ENCODE measurements at regions of chr3 and their contacts with region 1.

Region 1: GRCh38 chr3:19348929-19349564 is 200.7 kb downstream of the KCNH8 start:
- DNase-seq: peak; percentile 27
- CTCF ChIP-seq: peak; percentile 67

Region 2: GRCh38 chr3:19331931-19332330 is 17.1 kb before region 1 on chr3:
- CTCF ChIA-PET with region 1: interaction called, 12 read pairs
- POLR2A ChIA-PET with region 1: no interaction called
- DNase-seq: no peak
- CTCF ChIP-seq: no peak

Region 3: GRCh38 chr3:19364148-19364547 is 15.1 kb after region 1 on chr3:
- CTCF ChIA-PET with region 1: interaction called, 27 read pairs
- POLR2A ChIA-PET with region 1: no interaction called
- DNase-seq: no peak
- CTCF ChIP-seq: no peak

Region 4: DNA sequence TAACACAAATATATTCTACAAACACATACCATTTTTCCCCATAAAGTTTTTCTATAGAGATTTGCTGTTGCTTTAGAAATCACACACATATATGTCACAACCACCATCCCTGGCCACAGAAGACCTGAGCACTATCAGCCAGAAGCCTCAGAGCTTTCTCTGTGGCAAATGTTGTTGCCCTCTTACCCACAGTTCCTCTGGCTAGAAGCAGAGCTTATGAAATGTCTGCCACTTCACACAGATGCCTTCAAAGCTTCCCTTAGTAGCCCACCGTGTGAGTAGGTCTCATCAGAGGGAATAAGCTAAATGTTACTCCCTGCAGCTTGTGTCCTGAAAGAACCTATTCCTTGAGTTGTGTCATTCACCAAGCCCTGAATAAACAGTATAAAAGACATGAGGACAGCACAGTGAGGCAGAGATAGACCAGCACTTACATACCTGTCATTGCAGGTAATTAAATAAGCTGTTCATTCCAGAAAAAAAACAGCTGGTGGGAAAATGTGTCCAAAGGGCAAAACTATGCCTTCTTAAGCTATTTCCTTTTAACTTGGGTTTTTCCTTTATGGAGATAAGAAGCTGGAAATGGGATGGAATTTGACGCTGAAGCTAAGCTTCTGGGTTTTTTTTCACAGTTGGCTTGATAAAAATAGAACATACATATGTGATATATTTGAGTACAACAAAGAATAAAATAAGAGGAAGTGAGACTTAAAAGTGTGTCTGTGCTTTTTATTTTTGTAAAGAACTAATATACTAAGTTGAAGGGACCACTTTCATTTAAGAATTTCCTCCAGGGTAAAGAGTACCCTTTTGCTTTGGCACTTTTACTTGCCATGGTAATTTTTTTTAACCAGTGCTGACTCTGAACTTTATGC is 190.7 kb after region 1 on chr3:
- CTCF ChIA-PET with region 1: interaction called, 22 read pairs
- POLR2A ChIA-PET with region 1: no interaction called
- DNase-seq: peak; percentile 18
- CTCF ChIP-seq: no peak

Region 5: DNA sequence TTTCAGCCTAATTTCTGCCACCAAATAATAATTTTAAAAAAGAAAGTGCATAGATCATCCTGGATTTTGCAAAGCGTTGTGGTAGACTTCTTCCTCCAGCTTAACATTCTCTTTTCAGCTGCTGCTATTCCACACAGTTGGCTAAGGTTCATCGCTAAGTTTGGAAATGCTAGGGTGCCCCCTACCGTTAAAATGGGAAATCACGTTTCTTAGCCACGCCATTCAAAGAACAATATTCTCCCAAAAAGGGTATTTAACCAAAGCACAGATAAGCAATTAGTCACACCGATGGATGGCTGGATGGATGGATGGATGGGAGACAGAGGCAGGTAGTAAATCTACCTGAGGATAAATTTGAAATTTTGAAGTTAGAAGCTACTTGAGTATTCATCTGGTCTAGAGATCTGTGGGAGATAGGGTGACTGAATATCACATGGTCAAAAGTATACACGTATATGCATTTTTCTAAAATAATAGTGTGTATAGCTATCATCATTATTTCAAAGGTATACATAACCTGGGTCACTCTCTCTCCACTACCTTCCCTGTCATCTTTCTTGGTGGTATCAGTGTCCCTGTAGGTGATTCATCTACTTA is 517.8 kb after region 1 on chr3:
- CTCF ChIA-PET with region 1: interaction called, 70 read pairs
- POLR2A ChIA-PET with region 1: no interaction called
- DNase-seq: peak; percentile 45
- CTCF ChIP-seq: peak; percentile 79